WTC11 (cell line): ENCODE measurements at regions of chr19 and their contacts with region 1.

Region 1: DNA sequence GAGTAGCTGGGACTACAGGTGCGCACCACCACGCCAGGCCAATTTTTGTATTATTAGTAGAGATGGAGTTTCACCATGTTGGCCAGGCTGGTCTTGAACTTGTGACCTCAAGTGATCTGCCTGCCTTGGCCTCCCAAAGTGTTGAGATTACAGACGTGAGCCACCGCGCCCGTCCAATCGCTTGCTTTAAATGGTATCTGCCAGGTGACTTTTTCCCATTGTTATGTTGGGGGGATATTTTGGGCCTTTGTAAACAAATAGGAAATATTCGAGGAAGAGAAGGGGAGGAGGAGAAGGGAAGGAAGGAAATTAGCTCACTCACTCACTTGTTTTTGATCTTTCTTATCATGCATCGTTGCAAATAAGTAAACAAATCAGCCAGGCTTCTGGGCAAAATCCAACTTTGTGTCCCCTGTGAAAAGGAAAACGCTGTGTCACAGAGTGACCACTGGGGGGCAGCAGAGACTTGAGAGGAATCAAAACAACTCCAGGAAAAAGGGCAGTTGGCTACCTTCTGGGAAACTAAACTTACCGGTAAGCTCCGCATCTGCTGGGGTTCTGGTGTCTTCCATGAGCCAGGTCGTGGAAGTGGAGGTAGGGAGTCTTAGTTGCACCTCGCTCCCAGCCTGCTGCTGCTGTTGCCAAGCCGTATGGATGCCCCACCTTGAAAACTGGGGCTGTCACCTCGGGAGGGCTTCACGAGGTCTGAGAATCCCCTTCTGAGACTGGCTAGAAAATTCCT is 9.3 kb upstream of the RANBP3 start:
- DNase-seq: peak; percentile 84
- ATAC-seq: peak; percentile 46
- H3K4me3 Mint-ChIP-seq: no peak overlapping the region
- H3K27ac Mint-ChIP-seq: peak overlapping the region; percentile 46; the same call in 1 of the 2 replicates
- H3K4me1 Mint-ChIP-seq: peaks cover 12% of the 10 kb centered on the region
- H3K27me3 Mint-ChIP-seq: peaks cover 4% of the 10 kb centered on the region
- CTCF ChIP-seq: peak; percentile 90

Region 2: DNA sequence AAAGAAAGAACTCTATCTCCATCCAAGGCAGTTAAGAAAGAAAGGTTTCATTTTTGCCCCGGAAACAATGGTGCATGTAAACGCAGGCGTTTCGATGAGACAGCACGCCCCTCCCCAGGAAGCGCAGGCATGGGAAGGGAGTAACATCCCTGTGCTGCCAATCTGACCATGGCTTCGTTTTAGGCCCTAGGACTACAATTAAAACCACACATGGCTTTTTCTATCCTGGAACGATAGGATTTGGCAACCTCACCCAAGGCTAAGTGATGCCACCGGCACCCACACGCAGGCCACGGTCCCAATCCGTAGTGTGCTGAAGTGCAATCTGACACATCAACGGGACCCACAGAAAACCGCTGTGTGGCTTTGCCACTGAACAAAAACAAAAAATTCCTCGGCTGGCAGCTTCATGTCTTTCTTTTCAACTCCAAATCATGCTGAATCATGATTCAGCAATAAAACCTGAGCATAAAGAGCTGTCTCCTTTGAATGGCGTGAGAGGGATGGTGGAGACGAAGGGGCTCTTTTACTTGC is 33.5 kb before region 1 on chr19:
- CTCF ChIA-PET with region 1: interaction called, 11 read pairs
- POLR2A ChIA-PET with region 1: no interaction called
- DNase-seq: no peak
- ATAC-seq: no peak
- H3K4me3 Mint-ChIP-seq: peak overlapping the region; percentile 22; the same call in 1 of the 2 replicates
- H3K27ac Mint-ChIP-seq: peak overlapping the region; percentile 88
- H3K4me1 Mint-ChIP-seq: peaks cover 95% of the 10 kb centered on the region
- H3K27me3 Mint-ChIP-seq: no peaks in the 10 kb centered on the region; the same call in 1 of the 2 replicates
- CTCF ChIP-seq: no peak

Region 3: DNA sequence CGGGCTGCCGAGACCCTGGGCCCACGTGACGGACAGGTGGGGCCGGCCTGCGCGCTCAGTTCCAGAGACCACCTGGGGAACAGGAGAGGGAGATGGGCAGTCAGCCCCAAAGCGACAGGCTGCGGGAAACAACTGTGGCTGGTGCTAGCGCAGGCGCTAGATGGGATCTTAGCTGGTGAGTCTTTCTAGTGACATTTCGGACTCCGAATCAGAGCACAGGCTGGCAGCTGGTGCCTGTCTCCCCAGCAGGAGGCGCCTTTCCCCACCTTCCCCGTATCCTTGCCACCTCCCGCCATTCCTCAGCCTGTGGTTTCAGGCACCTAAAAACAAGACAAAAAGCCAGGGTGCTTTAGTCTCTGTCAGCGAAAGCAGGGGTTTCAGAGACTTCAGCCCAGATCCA is 10.1 kb after region 1 on chr19:
- CTCF ChIA-PET with region 1: interaction called, 13 read pairs
- POLR2A ChIA-PET with region 1: no interaction called
- DNase-seq: peak; percentile 64
- ATAC-seq: peak; percentile 69
- H3K4me3 Mint-ChIP-seq: no peak overlapping the region
- H3K27ac Mint-ChIP-seq: no peak overlapping the region
- H3K4me1 Mint-ChIP-seq: no peaks in the 10 kb centered on the region
- H3K27me3 Mint-ChIP-seq: no peaks in the 10 kb centered on the region
- CTCF ChIP-seq: peak; percentile 28

Region 4: GRCh38 chr19:6006896-6007295 is 19.6 kb after region 1 on chr19:
- CTCF ChIA-PET with region 1: interaction called, 11 read pairs
- POLR2A ChIA-PET with region 1: no interaction called
- DNase-seq: no peak
- ATAC-seq: no peak
- H3K4me3 Mint-ChIP-seq: no peak overlapping the region
- H3K27ac Mint-ChIP-seq: no peak overlapping the region
- H3K4me1 Mint-ChIP-seq: no peaks in the 10 kb centered on the region
- H3K27me3 Mint-ChIP-seq: no peaks in the 10 kb centered on the region
- CTCF ChIP-seq: no peak

Region 5: DNA sequence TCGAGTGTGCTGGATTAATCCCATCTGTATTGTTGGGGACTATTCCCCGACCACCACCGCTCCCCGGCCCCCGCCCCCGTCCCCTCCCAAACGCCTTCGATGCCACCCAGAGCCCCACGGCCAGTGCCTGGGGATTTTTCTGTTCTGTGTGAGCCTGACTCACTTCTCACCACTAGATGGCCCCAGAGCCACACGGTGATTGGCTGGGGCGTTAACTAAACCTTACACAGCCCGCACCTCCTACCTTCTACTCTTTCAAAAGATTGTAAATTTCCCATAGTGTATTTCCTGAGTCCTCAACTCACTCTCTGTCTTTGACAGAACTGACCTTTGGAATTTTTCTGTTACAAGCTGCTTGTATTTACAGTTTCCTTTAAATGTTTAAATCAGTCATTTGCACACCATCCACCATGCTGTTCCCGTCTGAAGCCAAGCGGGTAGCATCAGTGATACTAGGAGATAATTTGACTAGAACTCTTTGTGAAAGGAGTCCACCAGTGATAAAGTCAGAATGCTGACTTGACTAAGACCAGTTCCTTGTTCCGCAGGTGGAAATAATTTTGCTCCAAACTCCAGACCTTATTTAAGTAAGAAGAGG is 61.7 kb after region 1 on chr19:
- CTCF ChIA-PET with region 1: interaction called, 30 read pairs
- POLR2A ChIA-PET with region 1: no interaction called
- DNase-seq: peak; percentile 78
- ATAC-seq: peak; percentile 93
- H3K4me3 Mint-ChIP-seq: no peak overlapping the region
- H3K27ac Mint-ChIP-seq: no peak overlapping the region
- H3K4me1 Mint-ChIP-seq: peaks cover 12% of the 10 kb centered on the region; the same call in 1 of the 2 replicates
- H3K27me3 Mint-ChIP-seq: peaks cover 6% of the 10 kb centered on the region; the same call in 1 of the 2 replicates
- CTCF ChIP-seq: peak; percentile 75

Region 6: GRCh38 chr19:6125571-6125989 is 138.3 kb after region 1 on chr19:
- CTCF ChIA-PET with region 1: interaction called, 14 read pairs
- POLR2A ChIA-PET with region 1: no interaction called
- DNase-seq: peak; percentile 63
- ATAC-seq: peak; percentile 81
- H3K4me3 Mint-ChIP-seq: no peak overlapping the region
- H3K27ac Mint-ChIP-seq: no peak overlapping the region
- H3K4me1 Mint-ChIP-seq: no peaks in the 10 kb centered on the region
- H3K27me3 Mint-ChIP-seq: no peaks in the 10 kb centered on the region
- CTCF ChIP-seq: peak; percentile 89